ENCODE measurements at regions of chr6 and their contacts with region 1.

Region 1: DNA sequence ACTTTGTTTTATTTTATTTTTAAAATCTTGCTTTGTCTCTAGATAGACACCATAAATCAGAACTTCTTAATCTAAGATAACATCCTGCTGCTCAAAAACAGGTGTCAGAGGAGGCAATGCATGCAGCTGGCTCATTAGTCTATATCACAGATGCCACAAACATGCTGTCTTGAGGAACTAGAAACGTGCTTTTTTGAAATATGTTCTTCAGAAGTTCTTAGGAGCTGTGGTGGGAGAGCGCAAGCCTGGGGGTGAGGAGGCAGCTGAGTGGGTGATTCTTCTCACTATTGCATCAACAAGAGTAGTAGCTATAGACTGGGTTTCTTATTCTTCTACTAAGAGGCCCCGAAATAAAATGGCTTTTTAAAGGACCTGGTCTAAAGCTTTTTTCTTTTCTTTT is 23.4 kb downstream of the IL22RA2 start:
- DNase-seq: no peak
- H3K4me3 Mint-ChIP-seq: no peak overlapping the region
- H3K27ac Mint-ChIP-seq: no peak overlapping the region
- H3K4me1 Mint-ChIP-seq: peaks cover 18% of the 10 kb centered on the region
- H3K27me3 Mint-ChIP-seq: peaks cover 7% of the 10 kb centered on the region

Region 2: GRCh38 chr6:137058037-137058436 is 92.0 kb before region 1 on chr6:
- intact Hi-C with region 1: no loop called
- DNase-seq: no peak
- H3K4me3 Mint-ChIP-seq: no peak overlapping the region
- H3K27ac Mint-ChIP-seq: no peak overlapping the region
- H3K4me1 Mint-ChIP-seq: no peaks in the 10 kb centered on the region
- H3K27me3 Mint-ChIP-seq: peaks cover 18% of the 10 kb centered on the region

Region 3: GRCh38 chr6:137197684-137198645 is 47.9 kb after region 1 on chr6:
- intact Hi-C with region 1: loop called (anchors 5 kb)
- DNase-seq: no peak
- H3K4me3 Mint-ChIP-seq: no peak overlapping the region
- H3K27ac Mint-ChIP-seq: no peak overlapping the region
- H3K4me1 Mint-ChIP-seq: peaks cover 15% of the 10 kb centered on the region
- H3K27me3 Mint-ChIP-seq: no peaks in the 10 kb centered on the region